ENCODE measurements at regions of chr20 and their contacts with region 1.

Region 1: GRCh38 chr20:35489717-35490116 is 34.3 kb downstream of the CEP250 start:
- DNase-seq: no peak
- H3K4me3 ChIP-seq: no peak overlapping the region
- H3K27ac ChIP-seq: no peak overlapping the region
- H3K4me1 ChIP-seq: no peaks in the 10 kb centered on the region
- H3K27me3 ChIP-seq: no peaks in the 10 kb centered on the region
- CTCF ChIP-seq: no peak

Region 2: DNA sequence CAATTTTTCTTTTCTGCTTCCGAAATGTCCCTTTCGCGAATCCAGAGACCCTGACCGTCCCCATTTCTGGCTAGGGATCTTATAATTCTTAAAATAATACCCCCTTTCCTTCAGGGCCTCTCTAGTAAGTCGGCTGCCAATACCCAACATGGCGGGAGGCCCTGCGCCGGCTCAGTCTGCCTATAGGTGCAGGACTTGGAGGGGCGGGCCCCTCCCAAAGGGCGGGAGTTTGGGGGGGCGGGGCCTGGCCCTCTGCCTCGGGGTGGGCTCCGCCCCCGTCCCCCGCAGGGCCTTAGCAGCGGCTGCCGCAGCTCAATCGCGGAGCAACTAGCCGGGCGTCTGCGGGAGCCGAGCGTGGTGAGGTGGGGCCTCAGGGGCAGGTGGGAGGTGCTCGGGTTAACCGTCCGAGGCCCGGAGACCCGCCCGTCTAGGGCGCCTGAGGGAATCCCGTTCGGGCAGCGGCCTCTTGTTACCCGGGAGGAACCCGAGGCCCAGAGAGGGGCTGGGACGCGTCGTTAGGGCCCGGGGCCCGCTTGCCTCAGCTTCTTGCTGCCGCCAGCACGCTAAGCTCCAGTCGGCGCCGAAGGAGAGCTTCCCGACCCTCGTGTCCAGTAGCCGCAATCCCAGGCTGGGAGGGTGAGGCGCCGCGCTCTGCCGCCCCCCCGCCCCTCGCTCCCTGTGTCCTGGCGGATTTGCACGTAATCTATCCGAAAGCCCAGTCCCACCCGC is 34.7 kb before region 1 on chr20 and contains the start of gene CEP250:
- CTCF ChIA-PET with region 1: no interaction called
- dilution Hi-C with region 1: loop called (anchors 5 kb)
- in situ Hi-C with region 1: no loop called
- intact Hi-C with region 1: no loop called
- DNase-seq: peak; percentile 93
- H3K4me3 ChIP-seq: peak within 1 kb of the TSS; percentile 55 to 82 (median 79)
- H3K27ac ChIP-seq: peak within 1 kb of the TSS; percentile 98
- H3K4me1 ChIP-seq: peaks cover 29% of the 10 kb centered on the region
- H3K27me3 ChIP-seq: no peaks in the 10 kb centered on the region
- CTCF ChIP-seq: no peak
- total RNA-seq, gene CEP250: 19.0 to 45.5 TPM

Region 3: GRCh38 chr20:35561268-35561667 is 71.6 kb after region 1 on chr20:
- CTCF ChIA-PET with region 1: no interaction called
- dilution Hi-C with region 1: no loop called
- in situ Hi-C with region 1: no loop called
- intact Hi-C with region 1: no loop called
- DNase-seq: no peak
- H3K4me3 ChIP-seq: no peak overlapping the region
- H3K27ac ChIP-seq: no peak overlapping the region
- H3K4me1 ChIP-seq: no peaks in the 10 kb centered on the region
- H3K27me3 ChIP-seq: no peaks in the 10 kb centered on the region
- CTCF ChIP-seq: peak in 1 of 2 donors; percentile 2